ENCODE measurements at regions of chr3 and their contacts with region 1.

Region 1: DNA sequence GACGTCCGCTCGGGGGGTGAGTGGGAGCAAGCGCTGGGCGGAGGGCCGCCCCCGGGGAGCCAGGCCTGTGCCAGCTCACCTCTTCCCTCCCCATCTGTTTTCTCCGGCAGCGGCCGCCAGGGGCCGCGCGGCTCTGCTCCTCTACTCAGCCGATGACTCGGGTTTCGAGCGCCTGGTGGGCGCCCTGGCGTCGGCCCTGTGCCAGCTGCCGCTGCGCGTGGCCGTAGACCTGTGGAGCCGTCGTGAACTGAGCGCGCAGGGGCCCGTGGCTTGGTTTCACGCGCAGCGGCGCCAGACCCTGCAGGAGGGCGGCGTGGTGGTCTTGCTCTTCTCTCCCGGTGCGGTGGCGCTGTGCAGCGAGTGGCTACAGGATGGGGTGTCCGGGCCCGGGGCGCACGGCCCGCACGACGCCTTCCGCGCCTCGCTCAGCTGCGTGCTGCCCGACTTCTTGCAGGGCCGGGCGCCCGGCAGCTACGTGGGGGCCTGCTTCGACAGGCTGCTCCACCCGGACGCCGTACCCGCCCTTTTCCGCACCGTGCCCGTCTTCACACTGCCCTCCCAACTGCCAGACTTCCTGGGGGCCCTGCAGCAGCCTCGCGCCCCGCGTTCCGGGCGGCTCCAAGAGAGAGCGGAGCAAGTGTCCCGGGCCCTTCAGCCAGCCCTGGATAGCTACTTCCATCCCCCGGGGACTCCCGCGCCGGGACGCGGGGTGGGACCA is 632 bp upstream of the CRELD1 start:
- H3K4me3 Mint-ChIP-seq: peak overlapping the region; percentile 99
- H3K27ac Mint-ChIP-seq: peak overlapping the region; percentile 99
- H3K4me1 Mint-ChIP-seq: peaks cover 40% of the 10 kb centered on the region
- H3K27me3 Mint-ChIP-seq: no peaks in the 10 kb centered on the region

Region 2: DNA sequence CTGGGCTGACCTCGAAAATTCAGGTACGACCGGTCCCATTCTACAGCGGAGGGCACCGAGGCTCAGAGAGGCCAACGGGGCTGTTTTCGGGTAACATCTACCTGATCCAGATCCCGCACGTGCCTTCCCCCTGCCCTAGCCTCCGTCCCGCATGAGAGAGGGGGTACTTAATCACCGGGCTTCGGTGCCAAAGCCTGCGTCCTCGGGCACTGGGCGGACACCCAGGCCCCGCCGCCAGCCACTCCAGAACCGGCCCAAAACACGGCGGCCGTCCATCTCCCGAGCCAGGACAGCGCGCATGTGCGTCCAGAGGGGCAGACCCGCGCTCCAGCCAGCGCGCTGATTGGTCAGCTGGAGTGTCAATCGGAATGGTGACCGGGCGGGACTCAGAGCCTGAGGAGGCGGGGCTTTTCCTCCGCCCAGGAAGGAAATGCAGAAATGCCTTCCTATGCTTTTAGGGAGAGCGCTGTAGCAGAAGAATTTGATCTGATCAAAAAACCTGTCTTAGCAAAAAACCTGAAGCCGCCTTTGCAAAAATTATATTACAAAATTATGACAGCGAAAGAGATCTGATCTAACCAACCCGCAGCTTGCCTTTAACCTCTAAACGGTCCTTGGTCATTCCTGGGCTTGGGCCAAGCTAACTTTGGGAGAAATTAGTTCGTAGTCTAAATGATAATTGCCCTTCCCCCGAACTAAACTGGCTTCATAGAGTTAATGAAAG is 89.1 kb before region 1 on chr3 and contains the start of gene RPUSD3:
- intact Hi-C with region 1: loop called (anchors 5 kb)
- H3K4me3 Mint-ChIP-seq: peak within 1 kb of the TSS; percentile 99
- H3K27ac Mint-ChIP-seq: peak within 1 kb of the TSS; percentile 90
- H3K4me1 Mint-ChIP-seq: peaks cover 31% of the 10 kb centered on the region
- H3K27me3 Mint-ChIP-seq: no peaks in the 10 kb centered on the region

Region 3: DNA sequence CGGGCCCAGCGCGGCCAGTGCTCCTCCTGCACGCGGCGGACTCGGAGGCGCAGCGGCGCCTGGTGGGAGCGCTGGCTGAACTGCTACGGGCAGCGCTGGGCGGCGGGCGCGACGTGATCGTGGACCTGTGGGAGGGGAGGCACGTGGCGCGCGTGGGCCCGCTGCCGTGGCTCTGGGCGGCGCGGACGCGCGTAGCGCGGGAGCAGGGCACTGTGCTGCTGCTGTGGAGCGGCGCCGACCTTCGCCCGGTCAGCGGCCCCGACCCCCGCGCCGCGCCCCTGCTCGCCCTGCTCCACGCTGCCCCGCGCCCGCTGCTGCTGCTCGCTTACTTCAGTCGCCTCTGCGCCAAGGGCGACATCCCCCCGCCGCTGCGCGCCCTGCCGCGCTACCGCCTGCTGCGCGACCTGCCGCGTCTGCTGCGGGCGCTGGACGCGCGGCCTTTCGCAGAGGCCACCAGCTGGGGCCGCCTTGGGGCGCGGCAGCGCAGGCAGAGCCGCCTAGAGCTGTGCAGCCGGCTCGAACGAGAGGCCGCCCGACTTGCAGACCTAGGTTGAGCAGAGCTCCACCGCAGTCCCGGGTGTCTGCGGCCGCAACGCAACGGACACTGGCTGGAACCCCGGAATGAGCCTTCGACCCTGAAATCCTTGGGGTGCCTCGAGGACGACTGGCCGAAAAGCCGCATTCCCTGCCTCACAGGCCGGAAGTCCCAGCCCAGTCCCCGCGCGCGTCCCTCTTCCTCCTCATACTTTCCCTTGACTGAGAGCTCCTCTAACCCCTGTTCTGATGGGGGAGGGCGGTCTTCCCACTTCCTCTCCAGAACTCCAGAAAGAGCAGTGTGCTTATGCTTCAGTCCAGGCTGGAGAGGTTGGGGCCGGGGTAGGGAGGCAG is 17.5 kb before region 1 on chr3:
- intact Hi-C with region 1: loop called (anchors 2 kb)
- H3K4me3 Mint-ChIP-seq: peak overlapping the region; percentile 79
- H3K27ac Mint-ChIP-seq: peak overlapping the region; percentile 89
- H3K4me1 Mint-ChIP-seq: peaks cover 55% of the 10 kb centered on the region
- H3K27me3 Mint-ChIP-seq: peaks cover 3% of the 10 kb centered on the region

Region 4: GRCh38 chr3:9946112-9947024 is 13.4 kb after region 1 on chr3:
- intact Hi-C with region 1: loop called (anchors 2 kb)
- H3K4me3 Mint-ChIP-seq: peak overlapping the region; percentile 81
- H3K27ac Mint-ChIP-seq: peak overlapping the region; percentile 88
- H3K4me1 Mint-ChIP-seq: peaks cover 11% of the 10 kb centered on the region
- H3K27me3 Mint-ChIP-seq: peaks cover 13% of the 10 kb centered on the region

Region 5: DNA sequence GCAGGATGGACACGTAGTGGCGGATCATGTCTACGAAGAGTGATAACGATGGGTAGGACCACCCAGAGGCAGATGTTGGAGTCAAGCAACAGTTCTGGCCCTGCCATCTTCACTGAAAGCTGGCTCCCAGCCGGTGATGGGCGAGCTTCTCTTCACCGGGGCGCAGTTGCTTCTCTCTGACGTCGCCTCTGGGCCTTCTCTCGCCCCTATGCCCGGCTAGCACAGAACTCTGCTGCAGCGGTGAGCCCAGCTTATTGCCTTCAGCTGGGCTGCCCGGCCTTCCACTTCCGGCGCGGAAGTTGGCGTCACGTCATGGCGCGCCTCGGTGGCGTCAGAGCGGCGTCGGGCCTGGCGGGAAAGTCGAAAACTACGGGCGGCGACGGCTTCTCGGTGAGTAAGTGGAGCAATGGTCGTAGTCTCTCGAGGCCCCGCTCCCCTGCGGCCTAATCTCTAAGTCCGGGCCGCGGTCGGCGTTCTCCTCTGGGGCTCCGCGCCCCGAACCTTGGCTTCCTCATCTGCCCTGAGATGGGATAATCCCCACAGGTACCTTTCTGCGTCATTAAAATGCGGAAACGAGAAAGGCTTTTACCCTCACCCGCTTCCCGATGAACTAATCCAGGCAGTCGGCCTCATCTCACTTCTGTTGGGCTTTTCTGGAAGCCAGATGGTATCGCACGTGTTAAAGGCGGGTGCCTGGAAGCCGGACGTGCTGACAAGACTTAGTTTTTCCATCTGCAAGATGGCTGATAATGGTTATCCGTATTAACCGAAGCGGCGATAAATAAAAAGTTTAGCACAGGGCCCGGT is 93.3 kb after region 1 on chr3 and contains the start of gene FANCD2:
- intact Hi-C with region 1: loop called (anchors 10 kb)
- H3K4me3 Mint-ChIP-seq: peak within 1 kb of the TSS; percentile 89
- H3K27ac Mint-ChIP-seq: peak within 1 kb of the TSS; percentile 95
- H3K4me1 Mint-ChIP-seq: peaks cover 32% of the 10 kb centered on the region
- H3K27me3 Mint-ChIP-seq: no peaks in the 10 kb centered on the region

Region 6: DNA sequence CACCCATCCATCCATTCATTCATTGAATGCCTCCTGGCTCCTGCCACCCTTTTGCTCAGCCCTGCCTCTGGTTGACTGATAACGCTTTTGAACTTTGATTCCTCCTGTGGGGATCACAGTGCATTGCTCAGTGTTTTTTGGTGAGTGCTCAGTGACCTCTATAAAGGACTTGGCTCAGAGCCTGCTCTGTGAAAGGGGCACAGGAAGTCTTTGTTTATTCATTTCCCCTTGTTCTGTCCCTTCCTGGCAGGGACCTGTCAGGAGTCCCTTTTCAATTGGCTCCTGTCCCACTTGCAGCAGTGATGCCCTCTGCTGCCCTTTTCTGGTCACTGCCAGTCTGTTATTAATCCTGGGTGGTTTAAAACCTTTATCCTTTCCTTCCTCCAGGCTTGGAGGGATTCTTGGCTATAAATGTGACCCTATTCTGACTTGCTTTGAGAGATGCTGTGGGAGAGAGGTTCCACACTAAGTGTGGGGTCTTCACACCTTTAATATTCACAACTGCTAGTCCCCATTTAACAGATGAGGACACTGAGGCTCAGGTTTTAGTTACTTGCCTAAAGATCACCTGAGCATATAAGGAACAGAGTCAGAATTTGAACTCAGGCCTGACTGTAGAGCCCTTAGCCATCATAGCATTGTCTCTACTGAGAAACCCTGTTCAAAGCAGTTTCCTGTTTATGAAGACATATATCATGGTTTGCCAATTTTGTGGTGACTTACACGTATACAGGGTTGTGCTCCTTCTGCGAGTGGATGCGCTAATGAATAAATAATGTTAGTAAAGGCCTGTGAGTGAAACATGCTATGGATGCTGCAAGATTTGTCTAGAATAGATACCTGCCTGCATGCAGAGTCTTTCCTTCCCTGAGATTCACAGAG is 292.0 kb after region 1 on chr3:
- intact Hi-C with region 1: loop called (anchors 10 kb)
- H3K4me3 Mint-ChIP-seq: no peak overlapping the region
- H3K27ac Mint-ChIP-seq: peak overlapping the region; percentile 71
- H3K4me1 Mint-ChIP-seq: peaks cover 48% of the 10 kb centered on the region
- H3K27me3 Mint-ChIP-seq: no peaks in the 10 kb centered on the region